K562 (cell line): ENCODE measurements at regions of chr6 and their contacts with region 1.

Region 1: GRCh38 chr6:99330159-99330558 is 19.3 kb downstream of the FAXC start:
- DNase-seq: peak; percentile 68 to 79 (median 76)
- ATAC-seq: peak; percentile 92
- H3K4me3 ChIP-seq: no peak overlapping the region
- H3K27ac ChIP-seq: no peak overlapping the region
- H3K4me1 ChIP-seq: no peaks in the 10 kb centered on the region; a peak in 1 of 5 replicates
- H3K27me3 ChIP-seq: peaks cover 6 to 10% of the 10 kb centered on the region in 2 experiments; a peak in 1 of 5 replicates
- CTCF ChIP-seq: peak; percentile 60 to 86 (median 75)
- EP300 ChIP-seq: no peak
- POLR2A ChIP-seq: no peak
- RAD21 ChIP-seq: peak; percentile 54 to 72

Region 2: DNA sequence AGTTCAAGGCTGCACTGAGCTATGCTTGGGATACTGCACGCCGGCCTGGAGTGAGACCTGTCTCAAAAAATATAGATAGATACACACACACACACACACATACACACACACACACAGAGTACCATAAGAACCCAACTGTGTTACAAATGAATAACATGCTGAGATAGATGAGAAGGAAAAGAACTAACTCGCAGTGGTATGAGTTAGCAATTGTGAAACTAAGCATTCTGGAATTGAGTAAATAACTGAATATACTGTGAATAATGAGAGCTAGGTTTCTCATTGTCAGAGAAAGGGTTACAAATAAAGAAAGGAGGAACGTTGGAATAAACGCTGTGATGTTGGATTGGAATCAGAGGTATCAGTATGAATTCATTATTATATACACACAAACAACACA is 33.9 kb after region 1 on chr6:
- CTCF ChIA-PET with region 1: no interaction called
- POLR2A ChIA-PET with region 1: no interaction called
- in situ Hi-C with region 1: no loop called
- intact Hi-C with region 1: no loop called
- DNase-seq: no peak
- ATAC-seq: no peak
- H3K4me3 ChIP-seq: no peak overlapping the region
- H3K27ac ChIP-seq: no peak overlapping the region
- H3K4me1 ChIP-seq: no peaks in the 10 kb centered on the region
- H3K27me3 ChIP-seq: peaks cover 0 to 2% of the 10 kb centered on the region in 2 experiments; a peak in 1 of 5 replicates
- CTCF ChIP-seq: no peak
- EP300 ChIP-seq: no peak
- POLR2A ChIP-seq: no peak
- RAD21 ChIP-seq: no peak

Region 3: DNA sequence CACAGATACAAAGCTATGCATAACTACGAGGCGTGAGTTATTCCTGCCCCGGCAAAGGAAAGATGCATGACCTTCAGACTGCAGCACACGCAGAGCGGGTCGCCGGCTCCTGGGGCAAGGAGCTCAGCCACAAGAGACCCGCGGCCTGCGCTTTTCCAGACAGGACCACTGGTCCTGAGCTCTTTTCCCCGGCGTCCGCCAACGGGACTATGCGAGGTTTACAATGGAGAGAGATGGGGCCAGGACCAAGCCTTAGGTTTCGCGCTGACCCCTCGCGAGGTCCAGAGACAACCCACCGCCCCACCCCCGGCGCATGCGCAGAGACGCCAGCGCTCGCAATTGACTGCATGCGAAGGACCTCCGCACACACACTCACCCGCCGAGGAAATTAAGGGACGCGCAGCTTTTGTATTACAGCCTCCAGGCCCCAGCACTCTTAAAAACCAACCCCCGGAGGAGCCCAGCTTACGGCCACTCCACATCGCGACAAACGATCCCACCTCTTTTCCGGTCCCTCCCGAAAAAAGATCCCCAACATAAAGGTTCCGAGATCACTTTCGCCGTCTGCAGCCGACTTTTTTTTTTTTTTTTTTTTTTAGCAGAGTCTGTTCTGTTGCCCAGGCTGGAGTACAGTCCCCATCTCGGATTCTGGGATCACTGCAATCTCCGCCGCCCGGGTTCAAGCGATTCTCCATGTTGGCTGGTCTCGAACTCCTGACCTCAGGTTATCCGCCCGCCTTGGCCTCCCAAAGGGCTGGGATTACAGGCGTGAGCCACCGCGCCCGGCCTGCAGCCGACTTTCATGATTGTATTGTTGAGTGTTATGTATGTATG is 63.8 kb after region 1 on chr6 and contains the start of gene COQ3:
- CTCF ChIA-PET with region 1: no interaction called
- POLR2A ChIA-PET with region 1: no interaction called
- in situ Hi-C with region 1: no loop called
- intact Hi-C with region 1: loop called (anchors 5 kb)
- DNase-seq: peak; percentile 84 to 92 (median 90)
- ATAC-seq: peak; percentile 91
- H3K4me3 ChIP-seq: peak within 1 kb of the TSS; percentile 75
- H3K27ac ChIP-seq: peak within 1 kb of the TSS; percentile 94
- H3K4me1 ChIP-seq: peaks cover 3 to 4% of the 10 kb centered on the region in 2 experiments; a peak in 3 of 5 replicates
- H3K27me3 ChIP-seq: no peaks in the 10 kb centered on the region
- CTCF ChIP-seq: no peak
- EP300 ChIP-seq: peak; percentile 28; the same call in 1 of the 2 replicates
- POLR2A ChIP-seq: peak; percentile 89
- RAD21 ChIP-seq: no peak
- polyA plus RNA-seq, gene COQ3: 111 to 137 TPM

Region 4: DNA sequence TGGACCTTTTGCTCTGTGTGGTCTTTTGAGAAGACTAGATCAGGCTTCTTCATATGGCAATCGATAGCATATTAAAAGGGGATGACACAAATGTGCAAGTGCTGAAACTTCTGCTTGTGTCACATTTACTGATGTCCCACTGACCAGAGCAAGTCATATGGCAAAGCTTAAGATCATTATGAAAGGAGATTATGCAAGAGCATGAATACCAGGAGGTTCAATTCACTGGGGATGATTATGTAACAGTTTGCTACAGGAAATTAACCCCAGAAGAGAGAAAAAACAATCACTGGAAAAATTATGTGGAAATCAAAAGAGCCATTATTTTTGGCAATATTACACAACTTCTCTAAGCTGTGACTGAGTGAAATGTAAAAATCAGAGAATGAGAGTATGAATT is 262.7 kb after region 1 on chr6:
- CTCF ChIA-PET with region 1: no interaction called
- POLR2A ChIA-PET with region 1: no interaction called
- in situ Hi-C with region 1: no loop called
- intact Hi-C with region 1: no loop called
- DNase-seq: no peak
- ATAC-seq: no peak
- H3K4me3 ChIP-seq: no peak overlapping the region
- H3K27ac ChIP-seq: no peak overlapping the region
- H3K4me1 ChIP-seq: peaks cover 0 to 21% of the 10 kb centered on the region in 2 experiments; a peak in 2 of 5 replicates
- H3K27me3 ChIP-seq: peaks cover 52% of the 10 kb centered on the region in 2 experiments
- CTCF ChIP-seq: no peak
- EP300 ChIP-seq: no peak
- POLR2A ChIP-seq: no peak
- RAD21 ChIP-seq: no peak

Region 5: DNA sequence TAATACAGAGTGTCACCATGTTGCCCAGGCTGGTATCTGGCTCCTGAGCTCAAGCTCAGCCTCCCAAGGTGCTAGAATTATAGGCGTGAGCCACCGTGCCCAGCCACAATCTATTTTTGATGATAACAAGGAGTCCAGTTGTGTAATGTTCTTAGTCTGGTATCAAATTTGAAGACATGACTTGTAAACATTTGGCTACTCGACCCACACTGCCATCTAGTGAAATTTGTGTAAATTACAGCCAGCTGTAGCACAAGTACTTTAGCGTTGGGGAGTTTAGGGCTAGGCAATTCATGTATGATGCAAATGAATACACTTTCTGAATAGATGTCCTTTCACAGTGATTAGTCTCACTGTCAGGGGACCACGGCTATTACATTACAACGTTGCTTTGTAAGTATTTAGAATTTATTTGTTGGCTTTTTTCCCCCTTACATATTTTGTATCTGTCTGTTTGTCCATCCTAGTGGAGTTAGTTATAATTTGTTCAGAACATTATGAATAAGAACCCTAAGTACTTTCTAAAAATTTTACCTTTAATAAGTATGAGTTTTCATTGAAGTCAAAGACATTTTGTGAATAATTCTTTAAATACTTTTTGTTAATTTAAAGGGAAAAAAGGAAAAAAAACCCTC is 416.2 kb after region 1 on chr6:
- CTCF ChIA-PET with region 1: interaction called, 7 read pairs
- POLR2A ChIA-PET with region 1: no interaction called
- in situ Hi-C with region 1: loop called (anchors 25 kb)
- intact Hi-C with region 1: loop called (anchors 5 kb)
- DNase-seq: peak; percentile 38 to 74 (median 41)
- ATAC-seq: peak; percentile 93
- H3K4me3 ChIP-seq: no peak overlapping the region
- H3K27ac ChIP-seq: no peak overlapping the region
- H3K4me1 ChIP-seq: no peaks in the 10 kb centered on the region
- H3K27me3 ChIP-seq: no peaks in the 10 kb centered on the region
- CTCF ChIP-seq: peak; percentile 68 to 81 (median 80)
- EP300 ChIP-seq: no peak
- POLR2A ChIP-seq: no peak
- RAD21 ChIP-seq: peak; percentile 83 to 86

Region 6: DNA sequence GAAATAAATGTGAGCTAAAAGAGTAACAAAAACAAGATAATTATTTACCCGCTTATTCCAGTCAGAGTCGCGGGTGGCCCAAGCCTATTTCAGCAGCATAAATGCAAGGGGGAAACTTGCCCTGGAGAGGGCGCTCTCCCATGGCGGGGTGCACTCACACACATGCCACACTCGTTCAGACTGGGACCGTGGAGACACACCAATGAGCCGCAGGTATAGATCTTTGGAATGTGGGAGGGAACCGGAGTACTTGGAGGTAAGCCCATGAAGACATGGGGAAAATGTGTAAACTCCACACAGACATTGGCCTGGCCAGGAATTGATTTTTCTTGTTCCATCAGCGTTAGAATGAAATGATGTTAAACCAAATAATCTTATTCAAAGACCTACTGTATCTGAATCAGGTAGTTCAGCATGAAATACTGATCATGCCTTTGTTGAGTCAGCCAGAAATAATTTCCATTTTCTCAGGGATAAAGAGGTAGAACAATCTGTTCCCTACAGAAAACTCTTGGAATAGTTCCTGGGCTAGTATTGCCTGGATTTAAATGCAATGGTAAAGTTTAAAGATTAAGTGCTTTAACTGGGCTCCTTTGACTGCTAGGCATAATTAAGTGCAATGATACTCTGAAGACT is 472.4 kb after region 1 on chr6:
- CTCF ChIA-PET with region 1: no interaction called
- POLR2A ChIA-PET with region 1: no interaction called
- in situ Hi-C with region 1: no loop called
- intact Hi-C with region 1: no loop called
- DNase-seq: peak in 2 of 4 experiments; percentile 7 to 8
- ATAC-seq: peak; percentile 68; the same call in 2 of the 3 replicates
- H3K4me3 ChIP-seq: no peak overlapping the region
- H3K27ac ChIP-seq: no peak overlapping the region
- H3K4me1 ChIP-seq: no peaks in the 10 kb centered on the region
- H3K27me3 ChIP-seq: no peaks in the 10 kb centered on the region
- CTCF ChIP-seq: peak; percentile 25 to 35 (median 34); a peak in 3 of 6 replicates
- EP300 ChIP-seq: no peak
- POLR2A ChIP-seq: no peak
- RAD21 ChIP-seq: no peak

Region 7: DNA sequence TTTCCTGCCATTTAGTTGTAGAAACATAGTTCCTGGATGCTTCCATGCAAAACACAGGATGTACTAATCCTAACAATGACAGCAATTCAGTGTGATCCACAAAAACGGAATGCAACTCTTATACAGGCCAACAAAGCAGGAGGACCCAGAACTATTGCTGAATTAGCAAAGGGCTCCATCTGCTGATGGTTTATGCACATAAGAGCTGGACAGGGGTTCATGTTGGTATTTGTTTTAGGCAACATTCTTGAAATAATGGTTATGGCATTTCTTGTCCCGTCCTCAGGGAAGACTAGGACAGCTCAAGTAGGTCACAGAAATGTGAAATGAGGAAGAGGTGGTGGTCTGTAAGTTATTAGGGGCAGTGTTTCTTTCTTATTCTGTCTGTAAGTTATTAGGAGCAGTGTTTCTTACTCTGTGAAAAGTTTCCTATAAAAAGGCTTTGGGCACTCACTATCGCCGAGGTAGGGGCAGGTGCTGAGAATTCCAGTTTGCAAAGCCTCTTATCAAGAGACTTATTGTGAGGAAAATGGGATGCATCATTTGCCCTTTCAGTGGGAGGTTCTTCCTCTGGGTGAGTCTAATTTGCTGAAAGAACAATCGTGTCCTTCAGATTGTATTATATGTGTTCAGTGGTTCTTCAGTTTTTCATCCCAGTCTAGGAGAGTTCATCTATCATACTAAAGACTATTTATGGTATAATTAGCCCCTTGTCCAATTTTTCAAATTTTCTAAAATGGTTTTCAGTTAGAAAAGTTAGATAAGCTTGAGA is 492.8 kb after region 1 on chr6:
- CTCF ChIA-PET with region 1: interaction called, 7 read pairs
- POLR2A ChIA-PET with region 1: no interaction called
- in situ Hi-C with region 1: no loop called
- intact Hi-C with region 1: loop called (anchors 2 kb)
- DNase-seq: peak; percentile 25 to 59 (median 36)
- ATAC-seq: peak; percentile 99
- H3K4me3 ChIP-seq: no peak overlapping the region
- H3K27ac ChIP-seq: no peak overlapping the region
- H3K4me1 ChIP-seq: no peaks in the 10 kb centered on the region; a peak in 1 of 5 replicates
- H3K27me3 ChIP-seq: peaks cover 0 to 4% of the 10 kb centered on the region in 2 experiments; a peak in 4 of 5 replicates
- CTCF ChIP-seq: peak; percentile 57 to 69 (median 69)
- EP300 ChIP-seq: no peak
- POLR2A ChIP-seq: no peak
- RAD21 ChIP-seq: peak; percentile 67 to 77